BJ (cell line): ENCODE measurements at regions of chr11 and their contacts with region 1.

Region 1: DNA sequence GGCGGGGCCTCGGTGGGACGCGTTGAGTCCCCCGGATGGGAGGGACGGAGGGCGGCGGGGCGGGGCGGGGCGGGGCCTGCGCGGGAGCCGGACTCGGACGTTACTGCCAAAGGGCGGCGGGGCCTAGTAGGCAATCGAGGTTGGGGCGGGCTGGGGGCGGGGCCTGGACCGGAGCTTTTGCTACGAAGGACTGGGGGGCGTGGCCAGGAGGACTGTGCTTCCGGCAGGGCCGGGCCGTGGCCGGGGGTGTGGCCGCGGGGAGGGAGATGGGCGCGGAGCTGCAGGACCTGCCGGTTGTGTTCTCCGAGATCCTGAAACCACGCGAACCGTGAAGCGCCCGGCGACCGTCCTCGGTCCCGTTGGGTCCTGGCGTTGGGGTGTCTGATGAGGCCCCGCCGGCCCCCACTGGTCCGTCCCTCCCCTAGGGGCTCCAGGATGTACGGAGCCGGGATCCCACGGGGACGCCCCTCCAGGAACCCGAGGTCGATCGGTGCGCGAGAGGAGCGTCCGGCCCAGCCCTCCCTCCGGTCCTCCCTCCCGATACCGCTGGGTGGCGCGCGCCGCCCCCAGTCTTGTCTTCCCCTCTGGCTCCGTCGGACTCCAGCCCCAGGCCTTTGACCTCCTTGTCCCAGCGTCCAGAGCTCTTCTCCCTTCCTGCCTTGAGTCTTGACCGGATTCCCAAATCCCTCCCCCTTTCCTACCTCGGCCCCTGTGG is 648 bp upstream of the NUDT8 start:
- DNase-seq: peak; percentile 81
- H3K4me3 ChIP-seq: peak overlapping the region; percentile 80
- H3K27me3 ChIP-seq: no peaks in the 10 kb centered on the region
- CTCF ChIP-seq: peak; percentile 81

Region 2: GRCh38 chr11:67607202-67607906 is 23.0 kb before region 1 on chr11:
- CTCF ChIA-PET with region 1: interaction called, 88 read pairs
- POLR2A ChIA-PET with region 1: no interaction called
- DNase-seq: no peak
- H3K4me3 ChIP-seq: peak overlapping the region; percentile 93
- H3K27me3 ChIP-seq: peaks cover 2% of the 10 kb centered on the region
- CTCF ChIP-seq: no peak

Region 3: DNA sequence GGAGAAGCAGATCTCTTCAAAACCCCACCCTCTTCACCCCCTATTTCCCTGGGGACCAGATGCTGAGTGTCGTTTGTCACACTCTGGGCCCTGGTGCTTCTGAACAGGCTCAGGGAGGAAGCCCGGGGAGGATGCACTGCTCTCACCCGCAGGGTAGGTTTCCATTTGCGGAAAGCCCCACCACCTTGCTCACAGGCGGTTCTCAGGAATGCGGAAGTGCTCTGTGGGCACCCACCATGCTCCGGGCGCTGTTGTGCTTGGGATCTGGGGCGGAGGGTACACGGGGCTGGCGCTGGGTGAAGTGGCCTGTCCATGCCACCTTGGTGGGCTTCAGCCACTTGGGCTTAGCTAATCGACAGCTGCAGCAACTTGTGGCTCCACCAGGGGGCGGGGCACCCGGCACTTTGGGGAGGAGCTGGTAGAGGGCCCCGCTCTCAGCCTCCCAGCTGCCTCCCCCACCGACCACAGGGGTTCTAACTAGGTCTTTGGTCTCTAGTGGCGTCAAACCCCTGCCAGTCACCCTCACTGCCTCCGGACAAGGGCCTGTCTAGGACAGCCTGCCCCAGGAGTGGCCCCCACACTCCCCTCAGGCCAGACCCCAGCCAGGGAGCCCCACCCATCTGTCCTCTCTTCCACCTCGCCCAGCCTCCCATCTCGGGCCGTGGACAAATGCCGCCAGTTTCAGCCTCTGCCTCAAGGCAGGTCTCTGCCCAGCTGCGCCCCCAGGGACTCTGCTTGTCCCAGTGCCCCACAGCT is 16.2 kb before region 1 on chr11:
- CTCF ChIA-PET with region 1: interaction called, 88 read pairs
- POLR2A ChIA-PET with region 1: no interaction called
- DNase-seq: no peak
- H3K4me3 ChIP-seq: 0 out of 2 replicates have a peak overlapping the region, but pooled peaks have one; percentile 2
- H3K27me3 ChIP-seq: peaks cover 16% of the 10 kb centered on the region
- CTCF ChIP-seq: peak; percentile 75

Region 4: GRCh38 chr11:67648140-67649123 is 18.0 kb after region 1 on chr11:
- CTCF ChIA-PET with region 1: interaction called, 48 read pairs
- POLR2A ChIA-PET with region 1: no interaction called
- DNase-seq: no peak
- H3K4me3 ChIP-seq: no peak overlapping the region
- H3K27me3 ChIP-seq: no peaks in the 10 kb centered on the region; the same call in 1 of the 2 replicates
- CTCF ChIP-seq: no peak

Region 5: DNA sequence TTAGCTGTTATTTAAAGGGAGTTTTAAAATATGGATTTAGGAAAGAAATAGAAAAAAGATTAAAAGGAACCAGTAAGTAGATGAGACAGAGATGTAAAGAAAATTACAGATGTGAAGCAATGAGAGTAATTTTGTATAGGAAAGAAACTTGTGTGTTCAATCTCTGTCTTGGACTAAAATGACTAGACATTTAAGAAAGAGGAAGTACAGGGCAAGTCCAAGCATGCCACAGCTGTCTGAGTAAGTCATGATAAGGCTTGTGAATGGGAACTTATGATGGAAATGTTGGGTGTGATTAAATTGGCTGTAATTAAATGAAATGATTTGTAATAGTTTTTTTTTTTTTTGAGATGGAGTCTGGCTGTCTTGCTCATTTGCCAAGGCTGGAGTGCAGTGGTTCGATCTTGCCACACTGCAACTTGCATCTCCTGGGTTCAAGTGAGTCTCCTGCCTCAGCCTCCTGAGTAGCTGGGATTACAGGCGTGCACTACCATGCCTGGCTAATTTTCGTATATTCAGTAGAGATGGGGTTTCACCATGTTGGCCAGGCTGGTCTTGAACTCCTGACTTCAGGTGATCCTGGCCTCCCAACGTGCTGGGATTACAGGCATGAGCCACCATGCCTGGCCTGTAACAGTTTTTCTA is 26.0 kb after region 1 on chr11:
- CTCF ChIA-PET with region 1: interaction called, 65 read pairs
- POLR2A ChIA-PET with region 1: no interaction called
- DNase-seq: no peak
- H3K4me3 ChIP-seq: no peak overlapping the region
- H3K27me3 ChIP-seq: 0 out of 2 replicates have a peak, but pooled peaks cover 1% of the 10 kb centered on the region
- CTCF ChIP-seq: no peak